PC-3 (cell line): ENCODE measurements at regions of chr2 and their contacts with region 1.

Region 1: DNA sequence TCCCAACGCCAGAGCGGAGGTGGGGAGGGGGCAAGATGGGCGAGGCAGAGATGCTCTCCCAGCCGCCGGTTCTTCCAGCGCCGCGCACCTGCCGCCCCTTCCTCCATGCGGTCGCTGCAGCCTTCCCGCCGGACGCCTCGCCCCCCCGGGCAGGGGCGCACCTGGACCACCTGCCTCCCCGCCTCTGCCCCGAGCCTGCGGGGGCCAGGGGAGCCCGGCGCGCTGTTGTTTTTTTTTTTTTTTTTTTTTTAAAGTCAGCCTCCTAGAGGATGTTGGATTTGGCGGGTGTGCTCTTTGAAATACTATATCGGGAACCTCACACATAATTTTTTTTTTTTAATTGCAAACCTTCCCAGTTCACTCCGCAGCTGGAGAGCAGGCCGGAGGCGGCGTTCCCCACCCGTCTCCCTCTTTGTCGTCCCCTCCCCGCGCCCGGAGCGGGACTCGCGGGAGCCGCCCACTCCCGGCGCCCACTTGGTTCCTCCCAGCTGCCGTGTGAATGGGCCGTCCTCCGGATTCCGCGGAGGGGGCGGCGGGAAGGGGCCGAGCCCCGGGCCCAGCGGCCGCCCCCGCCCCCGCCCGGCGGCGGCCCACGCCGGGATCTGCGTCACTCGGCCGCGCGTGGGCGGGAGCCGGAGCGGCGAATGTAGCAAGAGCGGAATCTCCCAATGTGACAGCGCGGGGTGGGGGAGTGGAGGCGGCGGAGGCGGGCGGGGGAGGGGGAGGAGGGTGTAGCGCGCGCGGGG is 421 bp upstream of the NAB1 start:
- DNase-seq: peak; percentile 87
- ATAC-seq: peak; percentile 68
- H3K4me3 ChIP-seq: peak overlapping the region; percentile 88
- H3K27ac ChIP-seq: peak overlapping the region; percentile 59
- H3K4me1 ChIP-seq: peaks cover 21% of the 10 kb centered on the region
- H3K27me3 ChIP-seq: no peaks in the 10 kb centered on the region
- CTCF ChIP-seq: no peak

Region 2: DNA sequence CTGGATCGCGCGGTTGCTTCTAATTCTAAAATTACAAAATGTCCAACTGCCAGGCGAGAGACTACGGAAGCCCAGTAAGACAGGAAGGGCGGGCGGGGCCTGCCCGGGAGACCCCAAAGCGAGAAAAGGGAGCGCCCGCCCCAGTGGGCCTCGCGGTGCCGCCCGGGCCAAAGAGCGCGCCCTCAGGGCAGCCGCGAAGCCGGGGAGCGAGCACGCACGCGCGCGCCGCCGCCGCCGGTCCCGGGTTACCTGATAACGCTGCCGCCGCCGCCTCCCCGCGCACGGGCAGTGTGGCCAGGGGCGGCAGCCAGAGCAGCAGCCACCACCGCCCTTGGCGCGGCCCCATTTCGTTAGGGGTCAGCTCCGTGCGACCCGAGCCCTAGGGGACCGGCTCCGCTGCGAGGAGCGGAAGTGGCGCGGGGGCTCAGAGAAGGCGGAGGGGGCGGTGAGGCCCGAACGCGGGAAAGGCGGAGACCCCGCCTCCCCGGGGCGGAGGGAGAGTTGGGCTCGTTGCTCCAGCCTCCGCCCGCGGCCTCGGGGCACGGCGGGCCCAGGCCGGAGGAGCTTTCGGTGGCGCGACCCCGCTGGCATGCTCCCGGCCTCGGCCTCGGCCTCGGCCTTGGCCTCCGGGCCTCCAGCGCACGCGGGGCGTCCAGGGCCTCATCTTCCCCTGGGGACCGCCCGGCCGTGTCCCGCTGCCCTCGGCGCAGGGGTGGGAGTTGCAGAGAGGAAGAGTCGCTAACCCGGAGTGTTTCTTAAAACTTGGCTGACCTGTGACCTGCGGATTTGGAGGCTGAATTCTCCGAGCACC is 113.9 kb before region 1 on chr2 and contains the start of gene NEMP2:
- CTCF ChIA-PET with region 1: no interaction called
- POLR2A ChIA-PET with region 1: interaction called, 3 read pairs
- intact Hi-C with region 1: loop called (anchors 1 kb)
- DNase-seq: peak; percentile 75
- ATAC-seq: peak; percentile 82
- H3K4me3 ChIP-seq: peak within 1 kb of the TSS; percentile 91
- H3K27ac ChIP-seq: peak within 1 kb of the TSS; percentile 73
- H3K4me1 ChIP-seq: peaks cover 14% of the 10 kb centered on the region
- H3K27me3 ChIP-seq: no peaks in the 10 kb centered on the region
- CTCF ChIP-seq: no peak
- total RNA-seq, gene NEMP2: 2.5 and 3.8 TPM in 2 replicates

Region 3: DNA sequence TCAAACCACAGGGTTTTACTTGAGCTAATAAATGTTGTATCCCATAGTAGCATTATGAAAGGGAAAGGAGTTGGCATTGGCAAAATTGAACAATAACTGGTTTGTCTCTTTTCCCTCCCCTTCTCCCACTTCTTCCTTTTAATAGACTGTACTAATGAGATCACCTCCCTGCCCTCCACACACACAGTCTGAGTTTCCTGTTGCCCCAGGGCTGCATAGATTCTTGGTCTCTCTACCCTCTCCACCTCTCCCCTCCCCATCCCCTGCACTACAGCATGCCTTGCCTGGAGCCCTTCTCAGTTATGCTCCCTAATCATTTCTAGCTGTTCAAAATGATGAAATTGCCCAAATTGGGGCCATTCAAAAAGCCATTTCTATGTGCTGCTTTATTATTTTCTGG is 76.8 kb before region 1 on chr2:
- CTCF ChIA-PET with region 1: no interaction called
- POLR2A ChIA-PET with region 1: no interaction called
- intact Hi-C with region 1: loop called (anchors 2 kb)
- DNase-seq: peak; percentile 63
- ATAC-seq: peak; percentile 92
- H3K4me3 ChIP-seq: no peak overlapping the region
- H3K27ac ChIP-seq: peak overlapping the region; percentile 66
- H3K4me1 ChIP-seq: peaks cover 18% of the 10 kb centered on the region
- H3K27me3 ChIP-seq: no peaks in the 10 kb centered on the region
- CTCF ChIP-seq: no peak

Region 4: GRCh38 chr2:190578158-190579057 is 70.1 kb before region 1 on chr2:
- CTCF ChIA-PET with region 1: no interaction called
- POLR2A ChIA-PET with region 1: interaction called, 8 read pairs
- intact Hi-C with region 1: loop called (anchors 1 kb)
- DNase-seq: peak; percentile 93
- ATAC-seq: peak; percentile 86
- H3K4me3 ChIP-seq: peak overlapping the region; percentile 31
- H3K27ac ChIP-seq: peak overlapping the region; percentile 97
- H3K4me1 ChIP-seq: peaks cover 39% of the 10 kb centered on the region
- H3K27me3 ChIP-seq: no peaks in the 10 kb centered on the region
- CTCF ChIP-seq: no peak

Region 5: GRCh38 chr2:190607014-190607597 is 41.4 kb before region 1 on chr2:
- CTCF ChIA-PET with region 1: no interaction called
- POLR2A ChIA-PET with region 1: no interaction called
- intact Hi-C with region 1: loop called (anchors 5 kb)
- DNase-seq: peak; percentile 60
- ATAC-seq: peak; percentile 70
- H3K4me3 ChIP-seq: peak overlapping the region; percentile 56; the same call in 1 of the 2 replicates
- H3K27ac ChIP-seq: peak overlapping the region; percentile 93
- H3K4me1 ChIP-seq: peaks cover 20% of the 10 kb centered on the region
- H3K27me3 ChIP-seq: no peaks in the 10 kb centered on the region
- CTCF ChIP-seq: no peak

Region 6: DNA sequence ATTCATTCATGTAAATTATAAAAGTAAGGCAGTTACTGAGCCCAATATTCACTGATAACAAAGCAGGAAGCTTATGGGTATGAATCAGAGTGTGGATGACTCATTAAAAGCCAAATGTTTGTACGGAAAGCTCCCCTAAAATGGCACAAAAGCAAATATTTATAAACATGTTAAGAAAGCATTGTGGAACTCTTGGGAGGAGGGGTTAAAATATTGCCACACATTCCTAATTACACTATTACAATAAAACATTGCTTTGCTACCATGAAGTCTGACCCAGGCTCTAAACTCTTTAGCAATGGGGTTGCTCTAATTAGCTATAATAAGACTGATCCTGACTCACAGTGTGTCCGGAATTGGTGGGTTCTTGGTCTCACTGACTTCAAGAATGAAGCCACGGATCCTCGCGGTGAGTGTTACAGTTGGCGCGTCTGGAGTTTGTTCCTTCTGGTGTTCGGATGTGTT is 111.3 kb after region 1 on chr2:
- CTCF ChIA-PET with region 1: no interaction called
- POLR2A ChIA-PET with region 1: no interaction called
- intact Hi-C with region 1: loop called (anchors 5 kb)
- DNase-seq: peak; percentile 93
- ATAC-seq: peak; percentile 61
- H3K4me3 ChIP-seq: no peak overlapping the region
- H3K27ac ChIP-seq: 0 out of 2 replicates have a peak overlapping the region, but pooled peaks have one; percentile 23
- H3K4me1 ChIP-seq: peaks cover 23% of the 10 kb centered on the region
- H3K27me3 ChIP-seq: no peaks in the 10 kb centered on the region
- CTCF ChIP-seq: no peak

Region 7: GRCh38 chr2:191255756-191256312 is 607.4 kb after region 1 on chr2:
- CTCF ChIA-PET with region 1: no interaction called
- POLR2A ChIA-PET with region 1: no interaction called
- intact Hi-C with region 1: no loop called
- DNase-seq: peak; percentile 30
- ATAC-seq: peak; percentile 38; the same call in 1 of the 2 replicates
- H3K4me3 ChIP-seq: no peak overlapping the region
- H3K27ac ChIP-seq: no peak overlapping the region
- H3K4me1 ChIP-seq: peaks cover 9% of the 10 kb centered on the region; the same call in 1 of the 2 replicates
- H3K27me3 ChIP-seq: no peaks in the 10 kb centered on the region
- CTCF ChIP-seq: no peak